Mammary epithelial cell (primary cell): ENCODE measurements at regions of chr2 and their contacts with region 1.

Region 1: DNA sequence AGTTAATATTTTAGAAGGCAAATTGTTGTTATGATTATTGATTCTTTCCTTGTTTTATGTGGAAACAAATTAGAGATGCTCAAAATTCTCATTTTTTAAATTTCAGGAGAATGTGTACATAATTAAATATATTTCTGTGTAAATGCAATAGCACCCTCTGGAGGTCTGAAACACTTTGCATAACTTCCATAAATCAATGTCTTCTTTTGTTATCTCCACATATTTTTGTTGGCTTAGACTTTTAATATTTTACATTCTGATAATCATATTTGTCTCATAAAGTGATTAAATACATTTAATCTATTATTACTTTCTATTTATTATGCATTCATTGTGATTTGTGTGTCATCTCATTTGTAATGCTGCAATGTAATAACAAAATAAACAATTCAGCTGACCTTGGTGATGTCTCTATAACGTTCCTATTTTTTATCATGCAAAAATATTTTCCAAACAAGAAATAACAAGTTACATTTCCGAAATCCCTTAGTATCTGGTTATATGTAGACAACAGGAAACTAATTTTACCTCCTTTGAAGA is 201.8 kb upstream of the GALNT5 start:
- DNase-seq: peak; percentile 25
- H3K4me3 ChIP-seq: no peak overlapping the region
- H3K27ac ChIP-seq: no peak overlapping the region
- H3K4me1 ChIP-seq: peaks cover 16% of the 10 kb centered on the region
- H3K27me3 ChIP-seq: peaks cover 3% of the 10 kb centered on the region
- CTCF ChIP-seq: peak; percentile 56 to 58

Region 2: GRCh38 chr2:156332534-156333273 is 723.0 kb before region 1 on chr2 and contains the start of gene NR4A2:
- CTCF ChIA-PET with region 1: interaction called, 3 read pairs
- dilution Hi-C with region 1: no loop called
- in situ Hi-C with region 1: no loop called
- intact Hi-C with region 1: loop called (anchors 2 kb)
- DNase-seq: peak; percentile 92
- H3K4me3 ChIP-seq: peak within 1 kb of the TSS; percentile 66 to 86 (median 80)
- H3K27ac ChIP-seq: peak within 1 kb of the TSS; percentile 95
- H3K4me1 ChIP-seq: peaks cover 23% of the 10 kb centered on the region
- H3K27me3 ChIP-seq: no peaks in the 10 kb centered on the region
- CTCF ChIP-seq: no peak
- total RNA-seq, gene NR4A2: 0.50 to 1.3 TPM

Region 3: DNA sequence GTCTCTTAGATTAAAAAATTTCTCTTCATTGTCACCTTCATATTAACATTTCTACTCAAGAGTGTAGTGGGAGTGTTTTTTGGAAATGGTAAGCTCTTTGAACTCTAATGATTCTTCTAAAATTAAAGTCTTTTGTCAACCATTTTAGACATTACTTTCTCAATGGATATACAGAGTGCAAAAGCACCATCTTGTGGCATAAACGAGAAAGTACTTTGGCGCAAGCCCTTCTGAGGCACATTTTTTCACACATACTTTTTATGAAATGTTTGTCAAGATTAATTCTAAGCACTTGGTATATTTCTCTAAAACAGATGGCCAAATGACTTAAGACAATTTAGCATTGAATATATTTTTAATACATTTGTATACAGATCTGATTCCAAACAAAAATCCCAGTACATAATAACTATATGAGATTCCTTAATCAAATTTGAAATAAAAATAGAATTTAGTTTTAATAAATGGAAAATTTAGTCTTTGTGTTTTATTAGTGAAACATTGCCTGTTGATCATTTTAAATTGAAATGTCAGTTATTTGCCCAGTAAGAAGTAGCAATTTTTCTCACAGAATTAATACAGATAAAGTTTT is 138.5 kb after region 1 on chr2:
- CTCF ChIA-PET with region 1: no interaction called
- dilution Hi-C with region 1: no loop called
- in situ Hi-C with region 1: no loop called
- intact Hi-C with region 1: loop called (anchors 5 kb)
- DNase-seq: peak; percentile 49
- H3K4me3 ChIP-seq: no peak overlapping the region
- H3K27ac ChIP-seq: no peak overlapping the region
- H3K4me1 ChIP-seq: no peaks in the 10 kb centered on the region
- H3K27me3 ChIP-seq: no peaks in the 10 kb centered on the region
- CTCF ChIP-seq: peak; percentile 75 to 84

Region 4: DNA sequence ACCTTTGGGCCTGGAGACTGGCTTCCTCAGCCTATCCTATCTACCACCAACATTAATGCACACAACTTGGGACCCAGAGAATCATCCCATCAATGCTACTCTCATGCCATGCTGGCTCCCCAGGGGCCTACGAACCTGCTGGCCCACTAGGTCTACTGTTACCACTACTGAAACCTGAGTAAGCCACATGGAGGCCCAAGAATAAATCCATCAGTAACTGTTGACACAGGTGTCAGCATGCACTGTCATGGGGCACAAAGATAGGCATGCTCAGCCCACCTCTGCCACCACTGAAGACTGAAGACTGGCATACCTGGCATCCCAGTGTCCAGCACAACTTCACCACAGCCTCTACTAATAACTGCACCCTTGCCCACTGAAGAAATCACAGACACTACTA is 644.1 kb after region 1 on chr2:
- CTCF ChIA-PET with region 1: no interaction called
- dilution Hi-C with region 1: no loop called
- in situ Hi-C with region 1: no loop called
- intact Hi-C with region 1: no loop called
- DNase-seq: no peak
- H3K4me3 ChIP-seq: no peak overlapping the region
- H3K27ac ChIP-seq: no peak overlapping the region
- H3K4me1 ChIP-seq: no peaks in the 10 kb centered on the region
- H3K27me3 ChIP-seq: no peaks in the 10 kb centered on the region
- CTCF ChIP-seq: no peak